Breast epithelium (tissue), 4 donors: ENCODE measurements at regions of chr14 and their contacts with region 1.

Region 1: DNA sequence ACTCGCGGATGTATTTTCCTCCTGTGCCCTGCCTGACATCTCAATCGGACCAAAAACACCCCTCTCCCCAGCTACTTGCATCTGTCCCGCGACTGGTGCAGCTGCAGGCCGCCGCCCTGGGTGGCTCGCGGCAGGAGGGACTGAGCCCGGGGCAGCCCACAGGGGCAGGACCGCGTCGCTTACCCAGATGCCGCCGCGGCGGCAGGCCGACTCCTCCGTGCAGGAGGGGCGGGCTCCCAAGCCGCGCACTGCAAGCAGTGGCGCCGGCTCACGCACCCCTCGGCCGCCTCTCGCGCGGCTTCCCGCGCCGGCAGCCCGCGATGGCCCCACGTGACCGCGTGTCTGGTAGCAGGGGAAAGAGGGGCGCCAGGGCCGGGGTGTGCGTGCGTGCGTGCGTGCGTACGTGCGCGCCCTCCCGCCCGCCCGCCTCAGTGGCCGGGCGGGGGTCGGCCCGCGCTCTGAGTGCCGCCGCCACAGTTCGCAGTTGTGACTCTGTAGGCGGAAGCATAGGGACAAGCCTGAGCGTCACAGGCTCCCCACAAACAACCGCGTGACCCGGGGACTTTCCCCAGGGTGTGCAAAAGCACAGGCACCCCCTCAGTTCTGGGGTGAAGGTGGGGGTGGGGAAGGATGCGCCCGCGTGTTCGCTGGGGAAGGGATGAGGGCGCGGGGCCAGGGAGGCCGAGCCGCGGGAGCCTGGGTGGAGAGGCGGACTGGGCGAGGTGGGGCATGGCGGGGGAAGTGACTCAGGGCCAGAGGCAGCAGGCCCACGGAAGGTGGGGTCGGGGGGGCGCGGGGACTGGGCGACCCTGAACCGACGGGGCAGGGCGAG is at the start of gene ZBTB25:
- DNase-seq: peak; percentile 85 to 88
- H3K4me3 ChIP-seq: peak within 1 kb of the TSS; percentile 69 to 79 (median 73)
- H3K27ac ChIP-seq: peak within 1 kb of the TSS; percentile 98 to 99
- H3K4me1 ChIP-seq: peaks cover 0 to 22% of the 10 kb centered on the region in 2 donors
- H3K27me3 ChIP-seq: no peaks in the 10 kb centered on the region
- CTCF ChIP-seq: no peak
- POLR2A ChIP-seq: peak; percentile 66
- total RNA-seq, gene ZBTB25: 12.3 to 15.7 (median 14.4) TPM

Region 2: DNA sequence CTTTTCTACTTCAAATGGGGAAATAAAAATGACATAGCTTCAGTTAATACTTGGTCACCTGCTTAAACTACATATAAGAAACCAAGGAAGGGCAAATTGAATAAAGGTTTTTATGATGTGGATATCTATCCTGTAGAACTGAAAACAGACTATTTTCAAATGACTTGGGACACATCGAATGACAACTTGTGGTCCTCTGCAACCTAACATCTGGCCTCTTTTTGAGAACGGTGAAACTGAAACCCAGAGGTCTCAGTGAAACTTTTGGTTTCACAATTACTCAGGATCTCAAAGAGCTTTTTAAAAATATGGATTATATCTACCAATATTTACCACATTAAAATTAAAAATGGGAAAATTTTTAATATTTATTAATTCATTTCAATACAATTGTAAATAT is 1025.7 kb before region 1 on chr14:
- intact Hi-C with region 1: no loop called
- DNase-seq: no peak
- H3K4me3 ChIP-seq: peak overlapping the region in 1 of 3 donors; percentile 12
- H3K27ac ChIP-seq: no peak overlapping the region
- H3K4me1 ChIP-seq: no peaks in the 10 kb centered on the region
- H3K27me3 ChIP-seq: no peaks in the 10 kb centered on the region
- CTCF ChIP-seq: no peak
- POLR2A ChIP-seq: no peak

Region 3: GRCh38 chr14:64522591-64523355 is 19.1 kb after region 1 on chr14:
- intact Hi-C with region 1: no loop called
- DNase-seq: no peak
- H3K4me3 ChIP-seq: no peak overlapping the region
- H3K27ac ChIP-seq: no peak overlapping the region
- H3K4me1 ChIP-seq: no peaks in the 10 kb centered on the region
- H3K27me3 ChIP-seq: no peaks in the 10 kb centered on the region
- CTCF ChIP-seq: no peak
- POLR2A ChIP-seq: no peak

Region 4: GRCh38 chr14:64598404-64598803 is 94.7 kb after region 1 on chr14:
- intact Hi-C with region 1: no loop called
- DNase-seq: no peak
- H3K4me3 ChIP-seq: no peak overlapping the region
- H3K27ac ChIP-seq: no peak overlapping the region
- H3K4me1 ChIP-seq: no peaks in the 10 kb centered on the region
- H3K27me3 ChIP-seq: no peaks in the 10 kb centered on the region
- CTCF ChIP-seq: no peak
- POLR2A ChIP-seq: no peak

Region 5: DNA sequence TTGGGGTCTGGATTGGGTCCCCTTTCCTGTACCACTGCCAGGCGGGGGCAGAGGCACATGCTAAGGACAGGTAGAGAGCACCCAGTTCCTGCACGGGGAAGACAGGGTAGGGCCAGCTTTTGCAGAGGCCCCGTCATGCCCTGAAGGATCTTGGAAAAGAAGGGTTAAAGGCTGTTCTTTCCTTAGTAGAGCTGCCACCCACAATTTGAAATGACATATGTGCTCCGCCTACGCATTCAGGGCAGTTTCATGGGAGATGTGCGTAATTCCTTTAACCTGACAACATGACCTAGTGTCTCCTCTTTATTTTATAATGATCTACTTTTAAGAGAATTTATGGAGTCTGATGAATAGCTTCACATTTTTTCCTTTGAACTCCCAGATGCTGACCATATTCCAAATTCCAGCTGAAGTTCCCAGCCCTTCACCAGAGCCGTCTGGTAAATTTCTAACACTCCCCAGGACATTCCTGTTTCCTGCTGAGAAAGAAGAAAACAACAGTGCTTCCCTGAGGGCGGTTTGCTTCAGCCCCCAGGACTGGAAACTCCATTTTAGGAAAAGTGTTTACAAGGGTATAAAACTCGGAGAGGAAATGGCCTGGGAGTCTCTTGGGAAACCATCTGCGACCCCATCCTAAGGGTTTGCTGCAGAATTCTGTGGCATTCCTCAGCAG is 141.7 kb after region 1 on chr14:
- intact Hi-C with region 1: loop called (anchors 1 kb)
- DNase-seq: no peak
- H3K4me3 ChIP-seq: no peak overlapping the region
- H3K27ac ChIP-seq: peak overlapping the region; percentile 37 to 77
- H3K4me1 ChIP-seq: no peaks in the 10 kb centered on the region
- H3K27me3 ChIP-seq: no peaks in the 10 kb centered on the region
- CTCF ChIP-seq: no peak
- POLR2A ChIP-seq: no peak

Region 6: DNA sequence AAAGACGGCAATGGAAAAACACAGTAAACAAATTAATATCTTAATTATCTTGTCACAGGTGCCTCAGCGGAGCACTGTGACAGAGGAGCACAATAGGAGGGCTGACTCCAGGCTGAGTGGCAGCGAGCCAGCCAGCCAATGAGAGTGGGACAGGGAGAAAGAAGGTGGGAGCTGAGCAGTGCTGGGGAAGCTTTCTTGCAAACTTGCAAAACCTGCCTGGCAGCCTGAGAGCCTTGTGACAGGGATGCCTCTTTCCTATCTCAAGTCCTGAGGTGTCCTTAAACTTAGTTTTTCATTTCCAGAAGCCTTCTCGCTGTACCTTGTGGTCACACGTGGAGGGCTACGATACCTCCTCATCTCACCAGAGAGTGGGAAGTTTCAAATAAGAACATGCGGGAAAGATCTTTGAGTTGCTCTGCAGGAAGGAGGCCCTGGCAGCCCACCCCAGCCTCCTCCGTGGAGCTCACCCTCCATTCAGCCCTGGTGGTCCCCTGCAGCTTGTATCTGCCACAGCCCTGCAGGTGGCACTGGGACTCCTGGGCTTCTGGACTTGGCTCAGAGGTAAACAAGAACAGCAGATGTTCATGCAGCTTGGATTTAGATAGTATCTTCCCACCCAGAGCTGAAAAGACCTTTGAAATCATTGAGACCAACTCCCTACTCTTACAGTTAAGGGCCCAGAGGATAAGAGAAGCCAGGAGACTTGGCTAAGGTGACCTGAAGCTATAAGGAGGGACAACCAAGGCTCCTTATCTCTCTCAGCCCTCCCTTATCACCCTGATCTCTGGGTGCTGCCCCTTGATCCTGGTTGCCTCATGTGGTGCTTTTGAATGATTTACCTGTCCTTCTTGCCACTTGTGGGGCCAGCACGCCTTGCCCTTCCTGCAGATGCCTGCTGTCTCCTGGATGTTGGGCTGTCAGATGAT is 752.1 kb after region 1 on chr14:
- intact Hi-C with region 1: no loop called
- DNase-seq: peak; percentile 84 to 91
- H3K4me3 ChIP-seq: peak overlapping the region in 2 of 3 donors; percentile 24 to 49
- H3K27ac ChIP-seq: peak overlapping the region; percentile 75 to 76
- H3K4me1 ChIP-seq: peaks cover 6 to 9% of the 10 kb centered on the region in 2 donors
- H3K27me3 ChIP-seq: no peaks in the 10 kb centered on the region
- CTCF ChIP-seq: no peak
- POLR2A ChIP-seq: no peak